Activated naive CD4-positive, alpha-beta T cell treated with anti-CD3 and anti-CD28 coated beads, Interleukin-2, amount 10 ng/mL, durations not matched to agents 7 days and 5 days (primary cell): ENCODE measurements at regions of chr12 and their contacts with region 1.

Region 1: DNA sequence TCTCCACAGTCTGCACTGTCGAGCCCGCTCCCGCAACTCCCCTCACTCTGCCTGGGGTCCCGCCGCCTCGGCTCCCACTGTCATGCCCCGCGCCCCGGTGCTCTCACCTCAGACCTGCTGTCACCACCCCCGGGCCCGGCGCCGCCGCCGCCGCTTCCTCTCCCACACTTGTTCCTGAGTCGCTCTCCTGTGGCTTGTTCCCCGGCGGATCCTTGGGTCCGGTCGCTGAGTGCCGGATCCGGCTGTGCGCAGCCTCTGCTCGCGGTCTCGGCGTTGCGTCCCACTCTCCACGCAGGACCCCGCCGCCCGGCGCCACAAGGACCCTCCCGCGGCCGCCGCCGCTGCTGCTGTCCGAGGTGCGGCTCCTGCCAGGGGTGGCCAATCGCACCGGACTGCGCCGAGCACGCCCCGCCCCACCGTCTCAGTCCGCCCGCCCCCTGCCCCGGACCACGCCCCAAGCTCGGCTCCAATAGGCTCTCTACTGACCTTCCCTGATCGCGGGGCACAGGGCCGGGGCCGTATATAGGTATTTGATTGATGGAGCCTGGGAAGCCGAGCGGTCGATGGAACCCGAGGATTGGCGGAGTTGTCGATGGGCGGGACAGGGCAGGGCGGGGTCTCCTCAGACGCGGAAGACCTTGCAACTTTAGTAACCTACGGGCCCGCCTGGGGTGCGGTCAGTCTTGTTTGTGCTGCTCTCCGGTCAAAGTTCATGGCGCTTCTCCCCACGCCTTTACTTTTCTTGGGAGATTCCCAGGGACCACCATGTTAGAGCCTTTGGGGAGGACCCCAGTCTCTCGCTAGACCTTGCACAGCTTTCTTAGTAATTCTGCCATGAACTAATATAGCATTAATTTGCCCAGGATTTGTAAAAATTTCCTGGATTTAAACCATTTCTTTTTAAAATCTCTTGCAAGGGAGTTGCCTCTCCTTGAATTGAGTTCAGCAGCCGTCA is at the start of gene TAOK3:
- DNase-seq: peak; percentile 98
- H3K4me3 Mint-ChIP-seq: peak within 1 kb of the TSS; percentile 97
- H3K27ac Mint-ChIP-seq: peak within 1 kb of the TSS; percentile 94
- H3K4me1 Mint-ChIP-seq: peaks cover 57% of the 10 kb centered on the region
- H3K27me3 Mint-ChIP-seq: peaks cover 21% of the 10 kb centered on the region

Region 2: DNA sequence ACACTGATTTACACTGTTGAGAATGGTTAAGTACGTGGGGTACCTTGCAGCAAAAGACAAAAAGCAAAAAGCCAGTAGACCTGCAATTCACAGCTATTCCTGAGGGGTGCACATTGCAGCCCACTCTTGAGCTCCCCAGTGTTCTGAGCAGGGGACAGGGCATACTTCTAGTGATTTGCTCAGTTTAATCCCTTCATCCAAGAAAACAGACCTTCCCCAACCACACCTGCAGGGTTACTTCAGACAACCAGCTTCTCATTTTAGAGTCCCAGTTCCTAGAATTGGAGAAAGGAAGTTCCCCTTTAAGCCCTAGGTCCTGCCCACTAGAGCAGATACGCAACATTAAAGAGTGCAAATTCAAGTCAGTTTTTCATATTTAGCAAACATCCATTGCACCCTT is 308.2 kb before region 1 on chr12:
- CTCF ChIA-PET with region 1: interaction called, 10 read pairs
- DNase-seq: peak; percentile 40
- H3K4me3 Mint-ChIP-seq: peak overlapping the region; percentile 96
- H3K27ac Mint-ChIP-seq: peak overlapping the region; percentile 85
- H3K4me1 Mint-ChIP-seq: peaks cover 69% of the 10 kb centered on the region
- H3K27me3 Mint-ChIP-seq: peaks cover 25% of the 10 kb centered on the region

Region 3: GRCh38 chr12:118120579-118121363 is 252.0 kb before region 1 on chr12:
- CTCF ChIA-PET with region 1: interaction called, 47 read pairs
- DNase-seq: peak; percentile 75
- H3K4me3 Mint-ChIP-seq: no peak overlapping the region
- H3K27ac Mint-ChIP-seq: no peak overlapping the region
- H3K4me1 Mint-ChIP-seq: peaks cover 8% of the 10 kb centered on the region
- H3K27me3 Mint-ChIP-seq: no peaks in the 10 kb centered on the region

Region 4: DNA sequence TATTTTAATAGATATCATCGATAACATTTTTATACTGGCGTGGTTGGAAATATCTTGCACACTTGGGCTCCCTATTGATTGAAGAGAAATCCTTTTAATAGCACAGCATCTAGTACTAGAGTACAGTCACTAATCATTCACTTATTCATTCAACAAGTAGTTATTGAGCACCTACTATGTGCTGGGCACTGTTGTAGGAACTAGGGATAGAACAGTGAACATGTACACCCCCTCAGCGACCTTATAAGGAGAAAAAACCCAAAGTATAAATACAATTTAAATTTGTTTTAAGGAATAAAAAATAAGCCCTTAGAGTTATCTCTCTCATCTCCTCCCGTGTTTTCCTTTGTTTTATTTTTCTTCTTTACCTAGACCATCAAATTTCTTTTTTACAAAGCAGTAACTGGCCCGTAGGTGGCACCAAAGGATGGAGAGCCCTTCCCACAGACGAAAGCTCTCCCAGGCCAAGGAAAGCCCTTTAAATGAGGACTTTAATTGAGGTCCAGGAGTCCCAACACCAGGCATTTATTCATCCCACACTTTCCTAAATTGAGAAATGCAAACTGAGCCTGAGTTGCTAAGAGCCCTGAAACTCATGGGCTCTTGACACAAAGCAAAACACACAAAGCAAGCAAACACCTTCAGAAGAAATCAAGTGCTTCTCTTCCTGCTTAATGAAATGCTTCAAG is 207.9 kb before region 1 on chr12:
- CTCF ChIA-PET with region 1: interaction called, 17 read pairs
- DNase-seq: no peak
- H3K4me3 Mint-ChIP-seq: no peak overlapping the region
- H3K27ac Mint-ChIP-seq: no peak overlapping the region
- H3K4me1 Mint-ChIP-seq: peaks cover 6% of the 10 kb centered on the region
- H3K27me3 Mint-ChIP-seq: no peaks in the 10 kb centered on the region

Region 5: GRCh38 chr12:118183705-118184104 is 189.1 kb before region 1 on chr12:
- CTCF ChIA-PET with region 1: interaction called, 75 read pairs
- DNase-seq: no peak
- H3K4me3 Mint-ChIP-seq: no peak overlapping the region
- H3K27ac Mint-ChIP-seq: no peak overlapping the region
- H3K4me1 Mint-ChIP-seq: peaks cover 6% of the 10 kb centered on the region
- H3K27me3 Mint-ChIP-seq: no peaks in the 10 kb centered on the region

Region 6: DNA sequence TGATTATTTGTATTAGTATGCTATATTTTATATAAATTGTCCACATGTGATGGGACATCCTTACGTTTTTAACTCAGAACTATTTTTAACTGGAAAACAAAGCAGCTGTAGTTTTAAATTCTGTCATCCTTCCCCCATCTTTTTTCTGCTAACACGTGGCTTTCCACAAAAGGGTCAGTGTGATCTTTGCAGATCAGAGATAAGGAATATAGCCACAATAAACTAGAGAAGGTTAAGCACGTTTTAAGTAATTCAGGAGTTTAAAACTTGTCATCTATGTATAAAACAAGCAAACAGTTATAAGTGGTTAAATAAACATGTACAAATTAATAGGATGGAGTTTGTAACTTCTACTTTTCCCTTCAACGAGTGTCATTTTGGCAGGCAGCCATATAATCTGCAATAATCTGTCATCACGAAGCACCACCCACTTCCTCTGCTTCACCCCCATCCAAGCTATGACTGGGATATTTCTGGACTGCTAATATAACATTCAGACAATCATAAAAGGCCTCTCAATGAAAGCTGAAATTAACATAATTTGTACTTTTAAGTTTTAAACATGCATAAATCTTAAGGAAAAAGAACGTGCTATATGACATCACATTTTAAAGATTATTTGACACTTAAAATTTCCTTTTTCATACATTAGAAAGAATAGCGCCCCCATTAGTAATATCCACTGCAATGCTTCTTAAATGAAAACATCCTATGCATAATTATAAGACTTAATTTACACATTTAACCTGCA is 15.4 kb before region 1 on chr12:
- CTCF ChIA-PET with region 1: interaction called, 43 read pairs
- DNase-seq: peak; percentile 56
- H3K4me3 Mint-ChIP-seq: peak overlapping the region; percentile 90
- H3K27ac Mint-ChIP-seq: peak overlapping the region; percentile 92
- H3K4me1 Mint-ChIP-seq: peaks cover 42% of the 10 kb centered on the region
- H3K27me3 Mint-ChIP-seq: no peaks in the 10 kb centered on the region

Region 7: GRCh38 chr12:118432812-118433545 is 60.2 kb after region 1 on chr12:
- CTCF ChIA-PET with region 1: no interaction called
- DNase-seq: no peak
- H3K4me3 Mint-ChIP-seq: no peak overlapping the region
- H3K27ac Mint-ChIP-seq: no peak overlapping the region
- H3K4me1 Mint-ChIP-seq: no peaks in the 10 kb centered on the region
- H3K27me3 Mint-ChIP-seq: no peaks in the 10 kb centered on the region